Aorta (tissue), 5 donors: ENCODE measurements at regions of chr16 and their contacts with region 1.

Region 1: GRCh38 chr16:54633943-54634362 is 296.7 kb upstream of the IRX5 start:
- DNase-seq: peak; percentile 68 to 79
- ATAC-seq: peak; percentile 85
- H3K4me3 ChIP-seq: no peak overlapping the region
- H3K27ac ChIP-seq: peak overlapping the region in 1 of 2 donors; percentile 17
- H3K4me1 ChIP-seq: peaks cover 0 to 3% of the 10 kb centered on the region in 2 donors
- H3K27me3 ChIP-seq: no peaks in the 10 kb centered on the region

Region 2: GRCh38 chr16:54473226-54473993 is 160.5 kb before region 1 on chr16:
- intact Hi-C with region 1: no loop called
- DNase-seq: no peak
- ATAC-seq: no peak
- H3K4me3 ChIP-seq: no peak overlapping the region
- H3K27ac ChIP-seq: no peak overlapping the region
- H3K4me1 ChIP-seq: no peaks in the 10 kb centered on the region
- H3K27me3 ChIP-seq: no peaks in the 10 kb centered on the region

Region 3: DNA sequence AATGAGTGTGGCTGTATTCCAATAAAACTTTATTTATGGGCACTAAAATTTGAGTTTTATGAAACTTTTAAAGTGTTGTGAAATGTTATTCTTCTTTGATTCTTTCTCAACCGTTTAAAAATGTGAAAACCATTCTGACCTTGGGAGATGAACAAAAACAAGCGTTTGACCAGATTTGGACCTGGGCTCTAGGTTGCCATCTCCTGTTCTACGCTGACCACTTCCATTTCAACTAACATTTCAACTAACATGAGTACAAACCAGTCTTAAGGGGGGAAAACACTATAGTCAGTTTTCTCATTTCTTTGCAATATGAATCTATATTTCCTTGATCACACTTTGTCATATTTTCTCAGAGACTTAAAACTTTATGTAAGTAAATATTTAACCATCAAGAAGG is 178.3 kb after region 1 on chr16:
- intact Hi-C with region 1: loop called (anchors 5 to 10 kb)
- DNase-seq: no peak
- ATAC-seq: no peak
- H3K4me3 ChIP-seq: no peak overlapping the region
- H3K27ac ChIP-seq: no peak overlapping the region
- H3K4me1 ChIP-seq: peaks cover 5% of the 10 kb centered on the region in 2 donors
- H3K27me3 ChIP-seq: no peaks in the 10 kb centered on the region